Aorta (tissue), 5 donors: ENCODE measurements at regions of chr18 and their contacts with region 1.

Region 1: DNA sequence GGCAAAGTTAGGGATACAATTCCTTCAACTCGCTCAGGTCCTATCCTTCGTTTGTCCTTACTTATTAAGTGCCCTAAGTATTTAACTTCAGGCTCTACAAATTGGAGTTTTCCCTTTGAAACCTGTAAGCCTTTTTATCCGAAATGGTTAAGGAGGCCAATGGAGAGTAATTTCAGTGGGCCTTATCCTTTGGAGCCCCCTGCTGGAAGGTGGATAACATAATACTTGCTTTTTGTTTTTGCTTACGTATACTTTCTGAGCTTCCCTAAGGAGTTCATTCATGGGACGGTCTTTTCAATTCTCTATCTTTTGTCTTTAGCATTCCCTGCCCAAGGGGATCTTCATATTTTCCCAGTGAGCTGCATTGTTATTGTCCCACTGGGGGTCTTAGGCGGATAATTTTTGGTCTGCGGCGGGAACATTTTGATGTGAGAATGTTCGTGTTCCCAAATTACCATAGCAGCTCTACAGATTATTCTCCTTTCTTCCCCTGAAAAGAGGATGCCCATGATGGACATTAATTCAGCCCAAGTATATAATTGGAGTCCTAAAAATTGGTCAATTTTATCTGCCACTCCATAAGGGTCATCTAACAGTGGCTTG is 34.4 kb upstream of the TRAPPC8 start:
- DNase-seq: no peak
- ATAC-seq: no peak
- H3K4me3 ChIP-seq: no peak overlapping the region
- H3K27ac ChIP-seq: no peak overlapping the region
- H3K4me1 ChIP-seq: no peaks in the 10 kb centered on the region
- H3K27me3 ChIP-seq: peaks cover 0 to 2% of the 10 kb centered on the region in 2 donors

Region 2: GRCh38 chr18:31741097-31741735 is 236.2 kb before region 1 on chr18:
- intact Hi-C with region 1: loop called (anchors 10 kb)
- DNase-seq: no peak
- ATAC-seq: no peak
- H3K4me3 ChIP-seq: no peak overlapping the region
- H3K27ac ChIP-seq: no peak overlapping the region
- H3K4me1 ChIP-seq: no peaks in the 10 kb centered on the region
- H3K27me3 ChIP-seq: no peaks in the 10 kb centered on the region

Region 3: GRCh38 chr18:32021756-32022564 is 44.6 kb after region 1 on chr18:
- intact Hi-C with region 1: no loop called
- DNase-seq: no peak
- ATAC-seq: no peak
- H3K4me3 ChIP-seq: no peak overlapping the region
- H3K27ac ChIP-seq: no peak overlapping the region
- H3K4me1 ChIP-seq: no peaks in the 10 kb centered on the region
- H3K27me3 ChIP-seq: no peaks in the 10 kb centered on the region

Region 4: GRCh38 chr18:32126538-32126937 is 149.2 kb after region 1 on chr18:
- intact Hi-C with region 1: no loop called
- DNase-seq: no peak
- ATAC-seq: no peak
- H3K4me3 ChIP-seq: no peak overlapping the region
- H3K27ac ChIP-seq: no peak overlapping the region
- H3K4me1 ChIP-seq: no peaks in the 10 kb centered on the region
- H3K27me3 ChIP-seq: no peaks in the 10 kb centered on the region